Panc1 (cell line): ENCODE measurements at regions of chr17 and their contacts with region 1.

Region 1: DNA sequence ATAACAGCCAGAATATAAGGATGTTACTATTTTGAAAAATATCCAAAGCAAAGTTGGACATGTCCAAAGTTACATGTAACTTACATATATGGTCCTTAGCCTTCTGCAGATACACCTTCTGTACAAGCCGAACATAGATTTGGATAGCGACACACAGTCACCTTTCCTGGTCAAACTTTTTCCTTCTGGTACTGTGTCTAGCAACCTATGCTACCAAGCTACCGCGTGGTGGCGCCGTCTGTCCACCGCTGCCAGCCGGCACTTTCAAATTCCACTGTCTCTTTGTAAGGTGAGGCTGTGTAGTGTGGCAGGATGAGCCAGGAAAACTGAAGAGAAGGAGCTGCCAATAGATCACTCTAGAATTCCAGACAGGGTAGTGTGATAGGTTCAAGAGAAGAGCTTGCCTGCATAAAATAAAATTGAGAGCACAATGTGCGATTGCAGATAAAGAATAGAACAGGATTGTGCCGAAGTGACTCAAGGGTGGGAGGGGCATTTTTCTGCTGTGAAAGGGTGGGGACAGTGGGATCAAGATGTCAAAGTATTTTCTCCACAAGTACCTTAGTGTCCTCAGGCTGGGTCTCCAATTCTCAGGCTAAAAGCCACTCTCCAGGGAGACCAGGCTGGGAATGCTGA is 366.9 kb downstream of the SLC39A11 start:
- DNase-seq: no peak
- ATAC-seq: peak; percentile 85
- H3K4me3 ChIP-seq: no peak overlapping the region
- H3K27ac ChIP-seq: peak overlapping the region; percentile 83
- H3K4me1 ChIP-seq: peaks cover 31% of the 10 kb centered on the region
- H3K27me3 ChIP-seq: no peaks in the 10 kb centered on the region
- CTCF ChIP-seq: peak; percentile 99

Region 2: GRCh38 chr17:72587156-72587555 is 138.4 kb before region 1 on chr17:
- CTCF ChIA-PET with region 1: interaction called, 12 read pairs
- POLR2A ChIA-PET with region 1: no interaction called
- in situ Hi-C with region 1: no loop called
- intact Hi-C with region 1: no loop called
- DNase-seq: no peak
- ATAC-seq: no peak
- H3K4me3 ChIP-seq: peak overlapping the region; percentile 89 to 94; a peak in 3 of 4 replicates
- H3K27ac ChIP-seq: peak overlapping the region; percentile 96
- H3K4me1 ChIP-seq: peaks cover 35% of the 10 kb centered on the region
- H3K27me3 ChIP-seq: no peaks in the 10 kb centered on the region
- CTCF ChIP-seq: no peak

Region 3: DNA sequence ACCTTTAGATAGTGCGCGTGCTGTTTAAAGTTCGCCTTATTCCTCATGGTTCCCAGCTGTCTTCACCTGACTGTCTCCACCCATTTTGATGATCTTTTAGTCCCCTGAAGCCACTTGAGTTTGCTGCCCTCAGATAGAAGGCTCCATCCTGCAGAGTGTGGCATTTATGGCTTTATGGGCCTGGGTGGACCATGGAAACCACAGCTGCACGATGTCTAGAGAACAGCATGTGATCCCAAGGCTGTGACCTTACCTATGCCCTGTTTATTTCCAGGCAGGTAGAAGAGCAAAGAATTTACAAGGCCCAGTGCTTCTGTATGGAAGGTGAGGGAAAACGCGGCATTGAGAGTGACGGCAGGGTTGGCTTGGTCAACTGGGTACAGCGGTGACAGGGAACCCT is 10.0 kb after region 1 on chr17:
- CTCF ChIA-PET with region 1: no interaction called
- POLR2A ChIA-PET with region 1: no interaction called
- in situ Hi-C with region 1: no loop called
- intact Hi-C with region 1: no loop called
- DNase-seq: no peak
- ATAC-seq: no peak
- H3K4me3 ChIP-seq: no peak overlapping the region
- H3K27ac ChIP-seq: no peak overlapping the region
- H3K4me1 ChIP-seq: no peaks in the 10 kb centered on the region
- H3K27me3 ChIP-seq: no peaks in the 10 kb centered on the region
- CTCF ChIP-seq: no peak

Region 4: GRCh38 chr17:72962106-72962505 is 236.6 kb after region 1 on chr17:
- CTCF ChIA-PET with region 1: interaction called, 10 read pairs
- POLR2A ChIA-PET with region 1: no interaction called
- in situ Hi-C with region 1: no loop called
- intact Hi-C with region 1: no loop called
- DNase-seq: no peak
- ATAC-seq: no peak
- H3K4me3 ChIP-seq: no peak overlapping the region
- H3K27ac ChIP-seq: no peak overlapping the region
- H3K4me1 ChIP-seq: no peaks in the 10 kb centered on the region
- H3K27me3 ChIP-seq: no peaks in the 10 kb centered on the region
- CTCF ChIP-seq: no peak

Region 5: GRCh38 chr17:73156166-73156840 is 430.8 kb after region 1 on chr17:
- CTCF ChIA-PET with region 1: interaction called, 7 read pairs
- POLR2A ChIA-PET with region 1: no interaction called
- in situ Hi-C with region 1: no loop called
- intact Hi-C with region 1: loop called (anchors 5 kb)
- DNase-seq: peak; percentile 17
- ATAC-seq: peak; percentile 96
- H3K4me3 ChIP-seq: peak overlapping the region in 1 of 2 experiments; percentile 19; a peak in 2 of 4 replicates
- H3K27ac ChIP-seq: peak overlapping the region; percentile 44; the same call in 1 of the 2 replicates
- H3K4me1 ChIP-seq: peaks cover 16% of the 10 kb centered on the region
- H3K27me3 ChIP-seq: no peaks in the 10 kb centered on the region
- CTCF ChIP-seq: peak; percentile 95

Region 6: DNA sequence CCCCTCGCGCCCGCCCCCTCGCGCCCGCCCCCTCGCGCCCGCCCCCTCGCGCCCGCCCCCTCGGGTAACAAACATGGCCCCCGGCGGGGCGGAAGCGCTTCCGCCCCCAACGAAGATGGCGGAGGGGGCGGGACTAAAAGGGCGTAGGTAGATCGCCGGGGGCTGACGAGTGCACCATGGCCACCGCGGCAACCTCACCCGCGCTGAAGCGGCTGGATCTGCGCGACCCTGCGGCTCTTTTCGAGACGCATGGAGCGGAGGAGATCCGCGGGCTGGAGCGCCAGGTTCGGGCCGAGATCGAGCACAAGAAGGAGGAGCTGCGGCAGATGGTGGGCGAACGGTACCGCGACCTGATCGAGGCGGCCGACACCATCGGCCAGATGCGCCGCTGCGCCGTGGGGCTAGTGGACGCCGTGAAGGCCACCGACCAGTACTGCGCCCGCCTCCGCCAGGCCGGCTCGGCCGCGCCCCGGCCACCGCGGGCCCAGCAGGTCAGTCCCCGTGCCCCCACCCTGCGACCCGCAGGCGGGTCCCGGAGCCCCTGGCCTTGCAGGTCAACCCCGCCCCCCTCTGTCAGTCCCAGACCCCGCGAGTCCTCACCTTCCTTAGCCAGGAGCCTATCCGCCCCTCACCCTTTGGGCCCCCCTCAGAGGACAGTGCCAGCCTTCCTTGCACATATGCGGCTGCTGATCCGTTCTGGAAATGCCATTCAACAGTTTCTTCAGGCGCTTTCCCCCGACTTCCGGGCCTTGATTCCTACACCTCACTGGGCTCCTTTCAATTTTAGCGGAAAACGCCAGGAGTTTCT is 467.5 kb after region 1 on chr17 and contains the start of gene COG1:
- CTCF ChIA-PET with region 1: interaction called, 42 read pairs
- POLR2A ChIA-PET with region 1: no interaction called
- in situ Hi-C with region 1: no loop called
- intact Hi-C with region 1: loop called (anchors 1 kb)
- DNase-seq: no peak
- ATAC-seq: peak; percentile 87
- H3K4me3 ChIP-seq: peak within 1 kb of the TSS; percentile 62 to 89
- H3K27ac ChIP-seq: peak within 1 kb of the TSS; percentile 90
- H3K4me1 ChIP-seq: peaks cover 14% of the 10 kb centered on the region; the same call in 1 of the 2 replicates
- H3K27me3 ChIP-seq: no peaks in the 10 kb centered on the region
- CTCF ChIP-seq: no peak
- total RNA-seq, gene COG1: 41.2 TPM

Region 7: GRCh38 chr17:74212913-74213791 is 1487.6 kb after region 1 on chr17 and contains the start of gene TTYH2:
- CTCF ChIA-PET with region 1: no interaction called
- POLR2A ChIA-PET with region 1: no interaction called
- in situ Hi-C with region 1: no loop called
- intact Hi-C with region 1: no loop called
- DNase-seq: no peak
- ATAC-seq: peak; percentile 75
- H3K4me3 ChIP-seq: peak within 1 kb of the TSS; percentile 49 to 89
- H3K27ac ChIP-seq: peak within 1 kb of the TSS; percentile 78
- H3K4me1 ChIP-seq: peaks cover 45% of the 10 kb centered on the region
- H3K27me3 ChIP-seq: no peaks in the 10 kb centered on the region
- CTCF ChIP-seq: no peak
- total RNA-seq, gene TTYH2: 8.3 TPM